Calu3 (cell line): ENCODE measurements at regions of chr15 and their contacts with region 1.

Region 1: GRCh38 chr15:68106656-68107055 is 52.5 kb downstream of the PIAS1 start:
- DNase-seq: no peak
- H3K4me3 Mint-ChIP-seq: peak overlapping the region; percentile 15
- H3K27ac Mint-ChIP-seq: peak overlapping the region; percentile 5
- H3K4me1 Mint-ChIP-seq: peaks cover 27% of the 10 kb centered on the region
- H3K27me3 Mint-ChIP-seq: no peaks in the 10 kb centered on the region
- CTCF ChIP-seq: no peak

Region 2: DNA sequence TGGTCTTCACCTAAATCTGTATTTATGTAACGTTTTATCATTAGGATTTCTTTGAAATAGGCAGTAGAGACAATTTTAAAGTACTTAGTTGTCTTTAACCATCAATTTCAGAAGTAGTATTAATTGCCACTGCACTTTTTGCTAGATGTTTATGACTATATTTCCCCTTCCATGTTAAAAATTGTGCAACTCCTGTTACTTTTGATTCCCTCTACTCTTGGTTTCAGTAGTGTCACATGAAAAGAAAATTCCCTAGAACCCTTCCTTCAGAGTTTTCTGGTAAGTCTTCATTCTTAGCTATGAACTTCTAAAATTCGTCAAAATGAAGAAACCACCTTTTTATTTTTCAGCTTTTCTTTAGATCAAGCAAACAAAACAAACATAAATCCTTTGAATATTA is 45.5 kb before region 1 on chr15:
- CTCF ChIA-PET with region 1: no interaction called
- intact Hi-C with region 1: loop called (anchors 5 kb)
- DNase-seq: no peak
- H3K4me3 Mint-ChIP-seq: no peak overlapping the region
- H3K27ac Mint-ChIP-seq: no peak overlapping the region
- H3K4me1 Mint-ChIP-seq: peaks cover 28% of the 10 kb centered on the region
- H3K27me3 Mint-ChIP-seq: no peaks in the 10 kb centered on the region
- CTCF ChIP-seq: no peak

Region 3: GRCh38 chr15:68091743-68092142 is 14.9 kb before region 1 on chr15:
- CTCF ChIA-PET with region 1: no interaction called
- intact Hi-C with region 1: no loop called
- DNase-seq: no peak
- H3K4me3 Mint-ChIP-seq: no peak overlapping the region
- H3K27ac Mint-ChIP-seq: no peak overlapping the region
- H3K4me1 Mint-ChIP-seq: no peaks in the 10 kb centered on the region
- H3K27me3 Mint-ChIP-seq: no peaks in the 10 kb centered on the region
- CTCF ChIP-seq: no peak

Region 4: DNA sequence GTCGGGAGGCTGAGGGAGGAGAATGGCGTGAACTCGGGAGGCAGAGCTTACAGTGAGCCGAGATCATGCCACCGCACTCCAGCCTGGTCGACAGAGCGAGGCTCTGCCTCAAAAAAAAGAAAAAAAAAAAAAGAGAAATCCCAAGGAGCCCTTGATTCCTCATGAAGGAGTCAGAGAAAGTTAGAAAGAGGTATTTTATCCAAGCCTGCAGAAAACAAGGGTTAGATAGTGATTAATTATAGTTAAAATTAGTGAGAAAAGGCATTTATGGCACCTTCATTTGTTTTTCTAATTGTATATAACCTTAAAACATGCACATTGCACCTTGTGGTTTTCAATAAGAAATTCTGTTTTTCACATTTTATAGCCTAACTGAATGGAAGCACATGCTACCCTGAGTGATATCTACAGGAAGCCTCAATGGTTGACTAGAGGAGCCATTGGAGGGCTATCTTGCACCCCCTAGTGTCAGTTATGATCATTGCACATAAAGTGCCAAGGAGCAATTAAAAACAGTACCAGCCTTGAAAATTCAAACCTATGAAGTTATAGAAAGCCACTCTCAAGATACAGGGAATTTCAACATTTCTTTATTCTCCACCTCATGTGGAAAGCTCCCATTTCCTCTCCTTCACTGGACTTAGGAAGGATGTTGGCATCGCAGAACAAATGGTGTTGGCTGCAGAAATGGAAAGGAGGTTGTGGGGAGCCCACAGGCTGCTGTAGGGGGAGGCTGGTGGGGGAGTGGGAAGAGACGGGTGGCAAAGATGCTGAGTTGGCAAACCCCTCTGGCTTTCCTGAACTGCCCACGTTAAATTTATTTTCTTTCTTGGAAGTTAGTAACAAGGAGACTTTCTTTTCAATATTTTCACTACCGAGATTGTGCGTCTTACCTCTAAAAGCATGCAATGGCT is 276.8 kb after region 1 on chr15:
- CTCF ChIA-PET with region 1: no interaction called
- intact Hi-C with region 1: no loop called
- DNase-seq: peak; percentile 61
- H3K4me3 Mint-ChIP-seq: no peak overlapping the region
- H3K27ac Mint-ChIP-seq: no peak overlapping the region
- H3K4me1 Mint-ChIP-seq: no peaks in the 10 kb centered on the region
- H3K27me3 Mint-ChIP-seq: peaks cover 57% of the 10 kb centered on the region
- CTCF ChIP-seq: peak; percentile 64